ENCODE measurements at regions of chr22 and their contacts with region 1.

Region 1: DNA sequence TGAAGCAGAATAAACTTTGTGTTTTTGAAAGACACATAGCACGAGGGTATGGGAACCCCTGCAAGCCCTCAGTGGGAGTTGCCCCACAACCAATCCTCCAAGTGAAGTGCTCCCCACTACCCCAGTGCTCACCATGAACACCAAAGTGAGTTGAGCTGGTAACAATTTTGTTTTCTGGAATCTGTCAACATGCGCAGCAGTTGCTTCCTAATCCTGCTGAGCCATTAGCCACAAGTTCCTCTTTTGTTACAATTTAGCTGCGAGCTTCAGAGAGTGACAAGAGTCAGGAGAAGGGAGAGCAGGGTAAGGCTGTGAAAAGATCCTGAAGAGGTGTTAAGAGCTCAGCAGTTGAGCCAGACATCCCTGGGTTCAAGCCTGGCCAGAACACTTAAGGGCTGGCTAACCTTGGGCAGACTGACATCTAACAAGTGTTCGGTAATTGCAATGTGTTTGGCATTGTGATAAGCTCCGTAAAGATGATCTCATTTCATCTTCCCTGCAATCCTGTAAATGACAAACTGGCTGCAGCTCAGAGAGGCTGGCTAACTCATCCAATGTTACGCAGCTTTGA is 24.1 kb upstream of the ASPHD2 start:
- DNase-seq: peak; percentile 93

Region 2: GRCh38 chr22:26461188-26461810 is 56.4 kb after region 1 on chr22:
- in situ Hi-C with region 1: loop called (anchors 10 kb)
- DNase-seq: peak; percentile 54

Region 3: GRCh38 chr22:26711205-26711963 is 306.4 kb after region 1 on chr22:
- in situ Hi-C with region 1: no loop called
- DNase-seq: no peak